Activated B cell treated with CpG ODN at 0.5 μM for 24 hours (primary cell): ENCODE measurements at regions of chr6 and their contacts with region 1.

Region 1: DNA sequence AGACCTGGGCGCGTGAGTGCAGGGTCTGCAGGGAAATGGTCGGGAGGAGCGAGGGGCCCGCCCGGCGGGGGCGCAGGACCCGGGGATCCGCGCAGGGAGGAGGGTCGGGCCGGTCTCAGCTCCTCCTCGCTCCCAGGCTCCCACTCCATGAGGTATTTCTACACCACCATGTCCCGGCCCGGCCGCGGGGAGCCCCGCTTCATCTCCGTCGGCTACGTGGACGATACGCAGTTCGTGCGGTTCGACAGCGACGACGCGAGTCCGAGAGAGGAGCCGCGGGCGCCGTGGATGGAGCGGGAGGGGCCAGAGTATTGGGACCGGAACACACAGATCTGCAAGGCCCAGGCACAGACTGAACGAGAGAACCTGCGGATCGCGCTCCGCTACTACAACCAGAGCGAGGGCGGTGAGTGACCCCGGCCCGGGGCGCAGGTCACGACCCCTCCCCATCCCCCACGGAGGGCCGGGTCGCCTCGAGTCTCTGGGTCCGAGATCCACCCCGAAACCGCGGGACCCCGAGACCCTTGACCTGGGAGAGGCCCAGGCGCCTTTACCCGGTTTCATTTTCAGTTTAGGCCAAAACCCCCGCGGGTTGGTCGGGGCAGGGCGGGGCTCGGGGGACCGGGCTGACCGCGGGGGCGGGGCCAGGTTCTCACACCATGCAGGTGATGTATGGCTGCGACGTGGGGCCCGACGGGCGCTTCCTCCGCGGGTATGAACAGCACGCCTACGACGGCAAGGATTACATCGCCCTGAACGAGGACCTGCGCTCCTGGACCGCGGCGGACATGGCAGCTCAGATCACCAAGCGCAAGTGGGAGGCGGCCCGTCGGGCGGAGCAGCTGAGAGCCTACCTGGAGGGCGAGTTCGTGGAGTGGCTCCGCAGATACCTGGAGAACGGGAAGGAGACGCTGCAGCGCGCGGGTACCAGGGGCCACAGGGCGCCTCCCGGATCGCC is 54.2 kb upstream of the HLA-A start:
- DNase-seq: peak; percentile 74
- ATAC-seq: peak; percentile 86
- H3K4me3 Mint-ChIP-seq: peak overlapping the region; percentile 84
- H3K27ac Mint-ChIP-seq: peak overlapping the region; percentile 89
- H3K4me1 Mint-ChIP-seq: peaks cover 18% of the 10 kb centered on the region
- H3K27me3 Mint-ChIP-seq: no peaks in the 10 kb centered on the region
- CTCF ChIP-seq: no peak

Region 2: GRCh38 chr6:29909985-29910384 is 21.9 kb after region 1 on chr6:
- CTCF ChIA-PET with region 1: no interaction called
- POLR2A ChIA-PET with region 1: interaction called, 3 read pairs
- intact Hi-C with region 1: loop called (anchors 2 kb)
- DNase-seq: no peak
- ATAC-seq: no peak
- H3K4me3 Mint-ChIP-seq: no peak overlapping the region
- H3K27ac Mint-ChIP-seq: no peak overlapping the region
- H3K4me1 Mint-ChIP-seq: no peaks in the 10 kb centered on the region
- H3K27me3 Mint-ChIP-seq: no peaks in the 10 kb centered on the region
- CTCF ChIP-seq: no peak

Region 3: GRCh38 chr6:29926413-29927274 is 38.5 kb after region 1 on chr6:
- CTCF ChIA-PET with region 1: no interaction called
- POLR2A ChIA-PET with region 1: interaction called, 7 read pairs
- intact Hi-C with region 1: loop called (anchors 1 kb)
- DNase-seq: peak; percentile 50
- ATAC-seq: peak; percentile 77
- H3K4me3 Mint-ChIP-seq: peak overlapping the region; percentile 90
- H3K27ac Mint-ChIP-seq: peak overlapping the region; percentile 94
- H3K4me1 Mint-ChIP-seq: peaks cover 16% of the 10 kb centered on the region
- H3K27me3 Mint-ChIP-seq: no peaks in the 10 kb centered on the region
- CTCF ChIP-seq: no peak